Ascending aorta (tissue), 2 donors: ENCODE measurements at regions of chr1 and their contacts with region 1.

Region 1: GRCh38 chr1:36397378-36398230 is at the start of gene LSM10:
- DNase-seq: peak; percentile 74 to 97
- H3K4me3 ChIP-seq: peak within 1 kb of the TSS; percentile 75 to 80
- H3K27ac ChIP-seq: peak within 1 kb of the TSS; percentile 85 to 95
- H3K4me1 ChIP-seq: peaks cover 0 to 8% of the 10 kb centered on the region in 2 donors
- H3K27me3 ChIP-seq: no peaks in the 10 kb centered on the region
- CTCF ChIP-seq: no peak
- total RNA-seq, gene LSM10: 9.8 TPM

Region 2: GRCh38 chr1:36450270-36450918 is 52.8 kb after region 1 on chr1 and contains the start of gene OSCP1:
- intact Hi-C with region 1: loop called (anchors 5 kb)
- DNase-seq: peak; percentile 75 to 97
- H3K4me3 ChIP-seq: peak within 1 kb of the TSS; percentile 55 to 82
- H3K27ac ChIP-seq: peak within 1 kb of the TSS; percentile 95 to 97
- H3K4me1 ChIP-seq: peaks cover 3 to 8% of the 10 kb centered on the region in 2 donors
- H3K27me3 ChIP-seq: no peaks in the 10 kb centered on the region
- CTCF ChIP-seq: no peak
- total RNA-seq, gene OSCP1: 10.6 TPM

Region 3: GRCh38 chr1:37553927-37554808 is 1156.6 kb after region 1 on chr1 and contains the start of gene SNIP1:
- intact Hi-C with region 1: loop called (anchors 5 kb)
- DNase-seq: peak; percentile 68 to 96
- H3K4me3 ChIP-seq: peak within 1 kb of the TSS; percentile 90 to 94
- H3K27ac ChIP-seq: peak within 1 kb of the TSS; percentile 87 to 90
- H3K4me1 ChIP-seq: peaks cover 12 to 24% of the 10 kb centered on the region in 2 donors
- H3K27me3 ChIP-seq: no peaks in the 10 kb centered on the region
- CTCF ChIP-seq: no peak
- total RNA-seq, gene SNIP1: 14.4 TPM

Region 4: GRCh38 chr1:37595440-37596319 is 1198.1 kb after region 1 on chr1 and contains the start of gene GNL2:
- intact Hi-C with region 1: no loop called
- DNase-seq: peak; percentile 86 to 98
- H3K4me3 ChIP-seq: peak within 1 kb of the TSS; percentile 78 to 80
- H3K27ac ChIP-seq: peak within 1 kb of the TSS; percentile 81 to 82
- H3K4me1 ChIP-seq: peaks cover 5 to 15% of the 10 kb centered on the region in 2 donors
- H3K27me3 ChIP-seq: no peaks in the 10 kb centered on the region
- CTCF ChIP-seq: no peak
- total RNA-seq, gene GNL2: 17.0 TPM